Aorta (tissue), 5 donors: ENCODE measurements at regions of chr9 and their contacts with region 1.

Region 1: DNA sequence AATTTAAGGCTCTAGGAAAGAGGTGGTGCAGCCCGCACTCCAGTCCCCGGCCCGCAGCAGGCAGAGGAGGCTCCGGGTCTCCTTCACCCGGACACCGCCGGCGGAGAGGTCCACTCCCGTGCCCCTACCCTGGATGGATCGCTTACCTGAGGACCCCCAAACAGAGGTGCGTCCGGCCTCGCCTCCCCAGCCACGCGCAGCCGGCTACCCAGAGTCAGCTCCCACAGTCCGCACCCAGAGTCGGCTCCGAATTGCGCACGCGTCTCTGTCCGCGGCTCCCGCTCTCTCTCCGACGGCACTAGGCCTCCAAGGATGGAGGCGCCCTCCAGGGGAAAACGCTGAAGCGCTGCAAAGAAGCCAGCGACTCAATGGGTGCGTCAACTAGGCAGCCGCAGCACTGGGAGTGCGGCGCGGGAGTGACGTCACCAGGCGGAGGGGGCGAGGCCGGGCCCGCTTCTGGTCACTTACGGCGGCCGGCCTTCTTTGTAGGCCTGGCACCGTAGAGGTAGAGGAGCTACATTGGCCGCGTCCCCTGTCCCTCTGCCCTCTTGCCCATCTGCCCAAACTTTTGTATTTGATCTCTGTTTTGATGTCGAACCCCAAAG is at the start of gene ELP1:
- DNase-seq: peak; percentile 96 to 98
- ATAC-seq: peak; percentile 96
- H3K4me3 ChIP-seq: peak within 1 kb of the TSS; percentile 61 to 62
- H3K27ac ChIP-seq: peak within 1 kb of the TSS in 1 of 2 donors; percentile 79
- H3K4me1 ChIP-seq: peaks cover 0 to 5% of the 10 kb centered on the region in 2 donors
- H3K27me3 ChIP-seq: no peaks in the 10 kb centered on the region
- total RNA-seq, gene ELP1: 13.9 to 19.5 TPM

Region 2: GRCh38 chr9:109119439-109120203 is 185.8 kb after region 1 on chr9 and contains the start of gene TMEM245:
- intact Hi-C with region 1: loop called in 1 of 2 experiments (anchors 1 kb)
- DNase-seq: peak; percentile 98
- ATAC-seq: peak; percentile 98
- H3K4me3 ChIP-seq: peak within 1 kb of the TSS; percentile 67 to 93
- H3K27ac ChIP-seq: peak within 1 kb of the TSS; percentile 62 to 71
- H3K4me1 ChIP-seq: peaks cover under 1 to 6% of the 10 kb centered on the region in 2 donors
- H3K27me3 ChIP-seq: no peaks in the 10 kb centered on the region
- total RNA-seq, gene TMEM245: 49.4 to 60.1 TPM